SK-N-SH (cell line): ENCODE measurements at regions of chr2 and their contacts with region 1.

Region 1: DNA sequence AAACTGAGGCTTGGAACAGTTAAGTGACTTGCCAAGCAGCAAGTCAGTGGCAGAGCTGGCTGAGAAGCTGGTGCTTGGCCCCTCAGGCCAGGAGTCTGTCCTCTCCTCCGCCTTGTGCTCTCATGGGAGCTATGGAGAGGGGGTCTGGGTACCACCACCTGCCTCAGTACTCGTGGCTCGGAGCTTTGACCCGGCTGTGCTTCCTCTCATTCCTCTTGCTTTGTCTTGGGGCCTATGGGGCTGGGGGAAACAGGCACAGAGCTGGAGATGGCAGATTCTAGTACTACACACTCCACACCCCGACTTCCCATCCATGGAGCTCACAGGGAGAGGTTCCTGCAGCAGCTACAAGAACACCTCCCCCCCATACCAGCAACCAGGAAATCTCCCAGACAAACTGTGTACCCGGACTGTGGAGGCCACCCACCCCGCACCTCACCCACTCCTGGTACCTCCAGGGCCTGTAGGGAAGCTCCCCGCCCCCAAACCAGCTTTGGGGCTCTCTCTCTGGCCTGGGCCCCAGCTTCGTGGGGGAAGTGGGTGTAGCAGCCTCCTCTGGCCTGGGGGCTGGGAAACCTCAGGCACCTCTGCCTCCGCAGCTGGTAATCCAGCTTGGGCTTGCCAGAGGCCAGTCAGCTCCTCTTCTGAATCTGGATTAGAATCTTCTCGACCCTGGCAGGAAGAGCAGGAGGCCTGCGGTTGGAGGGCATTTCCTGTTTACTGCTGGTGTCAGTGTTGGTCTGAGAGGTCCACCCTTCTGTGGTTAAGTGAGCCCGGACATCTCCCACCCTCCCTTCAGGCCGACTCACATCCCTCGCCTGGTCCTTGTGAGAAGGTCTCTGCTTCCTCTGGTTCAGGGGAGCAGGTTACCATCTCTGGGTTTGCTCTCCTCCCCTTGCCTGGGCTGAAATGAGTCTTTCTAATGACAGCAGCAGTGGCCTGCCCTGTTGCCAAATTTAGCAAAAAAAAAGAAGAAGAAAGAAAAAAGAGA is 22.3 kb upstream of the RHOB start:
- DNase-seq: peak; percentile 57
- H3K4me3 ChIP-seq: 0 out of 4 replicates have a peak overlapping the region, but pooled peaks of 1 of the 2 experiments have one; percentile 3
- H3K27ac ChIP-seq: peak overlapping the region; percentile 3 to 57; a peak in 3 of 4 replicates
- H3K4me1 ChIP-seq: peaks cover 25 to 32% of the 10 kb centered on the region in 2 experiments
- H3K27me3 ChIP-seq: no peaks in the 10 kb centered on the region
- CTCF ChIP-seq: no peak
- EP300 ChIP-seq: peak; percentile 35 to 78; a peak in 3 of 4 replicates
- RAD21 ChIP-seq: no peak

Region 2: GRCh38 chr2:20438334-20439192 is 14.0 kb after region 1 on chr2:
- CTCF ChIA-PET with region 1: interaction called, 32 read pairs
- POLR2A ChIA-PET with region 1: interaction called, 3 read pairs
- DNase-seq: no peak
- H3K4me3 ChIP-seq: no peak overlapping the region
- H3K27ac ChIP-seq: peak overlapping the region in 1 of 2 experiments; percentile 6; a peak in 1 of 4 replicates
- H3K4me1 ChIP-seq: peaks cover 2 to 6% of the 10 kb centered on the region in 2 experiments; a peak in 2 of 4 replicates
- H3K27me3 ChIP-seq: no peaks in the 10 kb centered on the region; the same call in 1 of the 2 replicates
- CTCF ChIP-seq: no peak
- EP300 ChIP-seq: no peak
- RAD21 ChIP-seq: no peak